ENCODE measurements at regions of chr3 and their contacts with region 1.

Region 1: DNA sequence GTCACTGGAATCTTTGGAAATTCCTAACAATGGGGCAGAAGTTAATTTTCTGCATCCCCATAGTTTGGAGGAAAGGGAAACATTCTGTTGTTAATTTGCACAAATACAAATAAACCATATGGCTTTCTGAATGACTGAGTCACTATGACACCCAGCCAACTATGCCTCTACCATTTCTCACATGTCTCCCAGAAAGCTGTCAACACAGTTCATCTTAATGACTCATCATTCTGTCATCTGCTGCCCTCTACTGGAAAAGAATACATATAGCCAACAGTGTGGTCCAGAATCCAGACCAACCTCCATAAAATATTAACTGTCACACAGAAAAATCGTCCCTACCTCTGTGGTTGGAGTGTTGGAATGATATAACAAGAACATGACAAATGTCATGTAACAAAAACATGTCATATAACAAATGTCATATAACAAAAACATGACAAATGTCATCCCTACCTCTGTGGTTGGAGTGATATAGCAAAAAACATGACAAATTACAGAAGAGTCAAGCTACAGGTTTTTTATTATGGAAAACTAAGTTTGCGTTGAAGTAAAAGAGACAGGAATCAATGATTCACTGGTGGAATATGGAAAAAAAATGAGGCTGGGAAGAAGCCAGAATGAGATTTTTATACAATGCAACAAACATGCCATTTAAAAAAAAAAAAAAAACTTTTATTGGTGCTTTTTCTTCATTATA is 47.7 kb upstream of the GYG1 start:
- DNase-seq: peak; percentile 91
- H3K4me3 Mint-ChIP-seq: no peak overlapping the region
- H3K27ac Mint-ChIP-seq: no peak overlapping the region
- H3K4me1 Mint-ChIP-seq: no peaks in the 10 kb centered on the region
- H3K27me3 Mint-ChIP-seq: peaks cover 53% of the 10 kb centered on the region
- CTCF ChIP-seq: peak; percentile 71

Region 2: DNA sequence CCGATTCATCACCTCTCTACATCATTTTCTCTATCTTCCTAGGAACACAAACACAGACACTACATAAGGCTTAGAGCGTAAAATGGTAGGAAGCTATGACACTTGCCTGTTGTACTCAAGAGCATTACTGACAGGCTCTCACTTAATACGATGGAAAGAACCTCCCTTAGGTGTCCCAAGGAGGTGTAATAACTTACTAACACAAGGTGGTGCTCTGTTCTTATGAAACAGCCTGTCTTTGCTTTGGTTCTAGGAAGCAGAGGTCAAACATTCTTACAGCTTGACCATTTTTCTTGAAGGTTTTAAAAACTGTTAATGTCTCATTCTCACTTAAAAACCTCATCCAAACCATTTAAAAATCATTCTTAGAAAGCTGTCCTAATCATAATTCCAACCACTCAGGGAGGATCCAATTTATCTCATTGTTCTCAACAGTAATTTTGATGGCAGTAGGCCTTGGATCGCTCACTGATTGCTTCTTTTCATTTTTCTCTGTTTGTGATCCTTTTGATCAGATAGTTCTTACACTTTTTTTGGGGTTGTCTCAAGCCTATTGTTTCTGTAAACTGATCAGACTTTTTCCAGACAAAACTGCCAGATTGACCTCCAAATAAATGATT is 563.8 kb before region 1 on chr3:
- CTCF ChIA-PET with region 1: interaction called, 58 read pairs
- POLR2A ChIA-PET with region 1: interaction called, 3 read pairs
- intact Hi-C with region 1: loop called (anchors 1 kb)
- DNase-seq: peak; percentile 59
- H3K4me3 Mint-ChIP-seq: no peak overlapping the region
- H3K27ac Mint-ChIP-seq: no peak overlapping the region
- H3K4me1 Mint-ChIP-seq: no peaks in the 10 kb centered on the region
- H3K27me3 Mint-ChIP-seq: peaks cover 30% of the 10 kb centered on the region
- CTCF ChIP-seq: peak; percentile 38

Region 3: DNA sequence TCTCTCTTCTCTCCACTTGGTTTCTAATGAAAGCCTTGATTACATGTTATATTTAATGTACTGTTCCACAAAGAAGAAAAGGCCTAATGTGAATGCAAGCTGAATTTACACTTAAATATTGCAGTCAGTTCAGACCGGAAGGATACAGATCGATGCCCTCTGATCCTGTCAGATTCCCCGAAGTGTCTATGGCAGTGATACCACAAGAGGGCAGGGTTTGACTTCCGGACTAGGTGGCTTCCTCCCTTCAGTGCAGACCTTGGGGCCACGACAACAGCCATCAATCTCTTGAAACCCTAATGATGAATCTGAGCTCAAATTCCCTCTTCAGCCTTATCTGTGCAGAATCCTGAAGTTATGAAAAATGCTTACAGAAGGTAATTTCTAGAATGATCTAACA is 216.4 kb before region 1 on chr3:
- CTCF ChIA-PET with region 1: interaction called, 8 read pairs
- POLR2A ChIA-PET with region 1: no interaction called
- intact Hi-C with region 1: loop called (anchors 1 kb)
- DNase-seq: peak; percentile 49
- H3K4me3 Mint-ChIP-seq: no peak overlapping the region
- H3K27ac Mint-ChIP-seq: no peak overlapping the region
- H3K4me1 Mint-ChIP-seq: no peaks in the 10 kb centered on the region
- H3K27me3 Mint-ChIP-seq: peaks cover 65% of the 10 kb centered on the region
- CTCF ChIP-seq: peak; percentile 40

Measured in MCF 10A (cell line).